ENCODE measurements at regions of chr9 and their contacts with region 1.

Region 1: GRCh38 chr9:27548055-27548741 is 18.6 kb upstream of the MOB3B start:
- DNase-seq: no peak
- ATAC-seq: peak; percentile 74
- H3K4me3 ChIP-seq: no peak overlapping the region
- H3K27ac ChIP-seq: no peak overlapping the region
- H3K4me1 ChIP-seq: no peaks in the 10 kb centered on the region
- H3K27me3 ChIP-seq: no peaks in the 10 kb centered on the region
- CTCF ChIP-seq: peak; percentile 24 to 58 (median 30); a peak in 3 of 6 replicates
- EP300 ChIP-seq: no peak
- POLR2A ChIP-seq: no peak
- RAD21 ChIP-seq: peak; percentile 75

Region 2: GRCh38 chr9:27154908-27155307 is 393.3 kb before region 1 on chr9:
- CTCF ChIA-PET with region 1: no interaction called
- POLR2A ChIA-PET with region 1: no interaction called
- RAD21 ChIA-PET with region 1: no interaction called
- SMC1A ChIA-PET with region 1: no interaction called
- in situ Hi-C with region 1: no loop called
- intact Hi-C with region 1: no loop called
- DNase-seq: no peak
- ATAC-seq: no peak
- H3K4me3 ChIP-seq: no peak overlapping the region
- H3K27ac ChIP-seq: no peak overlapping the region
- H3K4me1 ChIP-seq: no peaks in the 10 kb centered on the region
- H3K27me3 ChIP-seq: no peaks in the 10 kb centered on the region
- CTCF ChIP-seq: no peak
- EP300 ChIP-seq: no peak
- POLR2A ChIP-seq: no peak
- RAD21 ChIP-seq: no peak

Region 3: GRCh38 chr9:27247756-27248155 is 300.4 kb before region 1 on chr9:
- CTCF ChIA-PET with region 1: interaction called, 6 read pairs
- POLR2A ChIA-PET with region 1: no interaction called
- RAD21 ChIA-PET with region 1: no interaction called
- SMC1A ChIA-PET with region 1: no interaction called
- in situ Hi-C with region 1: no loop called
- intact Hi-C with region 1: loop called (anchors 5 kb)
- DNase-seq: no peak
- ATAC-seq: peak; percentile 91
- H3K4me3 ChIP-seq: no peak overlapping the region
- H3K27ac ChIP-seq: no peak overlapping the region
- H3K4me1 ChIP-seq: no peaks in the 10 kb centered on the region
- H3K27me3 ChIP-seq: no peaks in the 10 kb centered on the region
- CTCF ChIP-seq: peak; percentile 46 to 69 (median 65); a peak in 5 of 6 replicates
- EP300 ChIP-seq: no peak
- POLR2A ChIP-seq: no peak
- RAD21 ChIP-seq: 0 out of 2 replicates have a peak, but pooled peaks have one; percentile 28

Region 4: DNA sequence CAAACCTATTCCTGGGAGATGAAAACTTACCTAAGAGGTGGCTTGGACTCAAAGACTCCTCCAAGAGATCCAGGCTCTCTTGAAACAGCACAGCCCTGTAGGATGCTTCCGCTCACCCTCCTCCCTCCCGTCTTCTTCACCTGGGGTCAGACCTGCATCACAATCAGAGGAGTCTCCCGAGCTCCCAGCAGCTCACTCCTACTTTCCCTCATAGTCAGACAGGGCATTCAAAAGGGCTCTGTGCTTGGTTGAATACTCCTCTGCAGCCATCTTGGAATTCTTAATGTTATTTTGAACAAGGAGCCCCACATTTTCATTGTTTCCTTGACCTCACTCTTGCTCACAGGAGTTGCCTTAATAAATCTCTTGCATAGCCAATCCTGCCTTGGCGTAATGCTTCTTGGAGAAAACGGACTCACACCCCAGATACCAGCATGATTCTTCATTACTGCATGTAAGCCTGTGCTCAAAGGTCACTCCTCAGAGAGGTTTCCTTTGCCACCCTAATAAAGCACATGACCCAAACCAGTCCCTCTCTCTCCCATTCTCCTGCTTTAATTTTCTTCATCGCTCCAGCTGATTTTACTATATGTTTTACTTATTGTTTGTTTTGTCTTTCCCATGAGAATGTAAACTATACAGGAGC is 71.2 kb before region 1 on chr9:
- CTCF ChIA-PET with region 1: no interaction called
- POLR2A ChIA-PET with region 1: no interaction called
- RAD21 ChIA-PET with region 1: no interaction called
- SMC1A ChIA-PET with region 1: no interaction called
- in situ Hi-C with region 1: no loop called
- intact Hi-C with region 1: no loop called
- DNase-seq: no peak
- ATAC-seq: no peak
- H3K4me3 ChIP-seq: no peak overlapping the region
- H3K27ac ChIP-seq: no peak overlapping the region
- H3K4me1 ChIP-seq: no peaks in the 10 kb centered on the region
- H3K27me3 ChIP-seq: no peaks in the 10 kb centered on the region
- CTCF ChIP-seq: no peak
- EP300 ChIP-seq: no peak
- POLR2A ChIP-seq: no peak
- RAD21 ChIP-seq: no peak

Region 5: GRCh38 chr9:27561685-27562084 is 13.5 kb after region 1 on chr9:
- CTCF ChIA-PET with region 1: interaction called, 6 read pairs
- POLR2A ChIA-PET with region 1: no interaction called
- RAD21 ChIA-PET with region 1: interaction called, 5 read pairs
- SMC1A ChIA-PET with region 1: interaction called, 40 read pairs
- in situ Hi-C with region 1: no loop called
- intact Hi-C with region 1: no loop called
- DNase-seq: no peak
- ATAC-seq: peak; percentile 60
- H3K4me3 ChIP-seq: no peak overlapping the region
- H3K27ac ChIP-seq: no peak overlapping the region
- H3K4me1 ChIP-seq: peaks cover 10% of the 10 kb centered on the region; the same call in 1 of the 2 replicates
- H3K27me3 ChIP-seq: no peaks in the 10 kb centered on the region
- CTCF ChIP-seq: no peak
- EP300 ChIP-seq: no peak
- POLR2A ChIP-seq: no peak
- RAD21 ChIP-seq: no peak

Region 6: GRCh38 chr9:27688954-27689353 is 140.8 kb after region 1 on chr9:
- CTCF ChIA-PET with region 1: no interaction called
- POLR2A ChIA-PET with region 1: no interaction called
- RAD21 ChIA-PET with region 1: no interaction called
- SMC1A ChIA-PET with region 1: no interaction called
- in situ Hi-C with region 1: no loop called
- intact Hi-C with region 1: no loop called
- DNase-seq: no peak
- ATAC-seq: no peak
- H3K4me3 ChIP-seq: no peak overlapping the region
- H3K27ac ChIP-seq: no peak overlapping the region
- H3K4me1 ChIP-seq: no peaks in the 10 kb centered on the region
- H3K27me3 ChIP-seq: no peaks in the 10 kb centered on the region
- CTCF ChIP-seq: no peak
- EP300 ChIP-seq: no peak
- POLR2A ChIP-seq: no peak
- RAD21 ChIP-seq: no peak

Measured in GM12878 (cell line).